Mammary epithelial cell (primary cell): ENCODE measurements at regions of chr22 and their contacts with region 1.

Region 1: GRCh38 chr22:47783433-47784366 is 1021.2 kb downstream of the TBC1D22A start:
- DNase-seq: no peak
- H3K4me3 ChIP-seq: no peak overlapping the region
- H3K27ac ChIP-seq: no peak overlapping the region
- H3K4me1 ChIP-seq: no peaks in the 10 kb centered on the region
- H3K27me3 ChIP-seq: no peaks in the 10 kb centered on the region
- CTCF ChIP-seq: no peak

Region 2: DNA sequence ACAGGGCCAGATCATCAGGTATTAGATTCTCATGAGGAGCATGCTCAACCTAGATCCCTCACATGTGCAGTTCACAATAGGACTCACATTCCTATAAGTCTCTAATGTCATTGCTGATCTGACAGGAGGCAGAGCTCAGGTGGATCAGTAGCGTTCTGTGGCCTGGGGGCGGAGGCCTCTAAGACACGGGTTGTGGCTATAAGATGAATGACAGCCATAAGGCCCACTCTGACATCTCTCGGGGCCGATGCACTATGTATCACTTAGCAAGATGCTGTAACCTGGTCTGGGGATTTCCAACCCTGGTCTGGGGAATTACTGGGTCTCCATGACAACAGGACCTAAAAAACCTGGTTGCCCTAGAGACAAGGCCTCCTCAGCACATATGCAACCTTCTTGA is 88.5 kb before region 1 on chr22:
- CTCF ChIA-PET with region 1: no interaction called
- dilution Hi-C with region 1: no loop called
- in situ Hi-C with region 1: no loop called
- intact Hi-C with region 1: no loop called
- DNase-seq: no peak
- H3K4me3 ChIP-seq: no peak overlapping the region
- H3K27ac ChIP-seq: no peak overlapping the region
- H3K4me1 ChIP-seq: no peaks in the 10 kb centered on the region
- H3K27me3 ChIP-seq: no peaks in the 10 kb centered on the region
- CTCF ChIP-seq: no peak

Region 3: DNA sequence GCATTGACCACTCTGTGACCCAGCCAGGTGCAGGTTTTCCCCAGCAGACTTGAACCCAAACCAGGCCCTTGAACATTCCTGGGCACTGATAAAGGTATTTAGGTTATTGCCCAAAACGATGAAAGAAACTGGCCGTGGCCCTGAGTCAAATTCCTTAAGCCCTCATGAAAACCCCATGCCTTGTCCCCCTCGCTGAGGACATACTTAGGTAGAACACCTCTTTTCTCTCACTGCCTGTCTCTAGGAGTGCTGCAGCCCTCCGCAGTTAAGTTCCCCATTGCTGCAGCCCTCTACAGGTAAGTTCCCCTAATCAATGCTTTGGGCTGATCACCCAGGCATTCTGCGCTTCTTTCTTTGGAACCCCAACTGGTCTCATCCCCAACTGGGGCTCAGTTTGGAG is 59.7 kb before region 1 on chr22:
- CTCF ChIA-PET with region 1: no interaction called
- dilution Hi-C with region 1: loop called (anchors 5 kb)
- in situ Hi-C with region 1: no loop called
- intact Hi-C with region 1: no loop called
- DNase-seq: no peak
- H3K4me3 ChIP-seq: no peak overlapping the region
- H3K27ac ChIP-seq: no peak overlapping the region
- H3K4me1 ChIP-seq: no peaks in the 10 kb centered on the region
- H3K27me3 ChIP-seq: no peaks in the 10 kb centered on the region
- CTCF ChIP-seq: no peak